Common myeloid progenitor, CD34-positive (primary cell): ENCODE measurements at regions of chr1 and their contacts with region 1.

Region 1: DNA sequence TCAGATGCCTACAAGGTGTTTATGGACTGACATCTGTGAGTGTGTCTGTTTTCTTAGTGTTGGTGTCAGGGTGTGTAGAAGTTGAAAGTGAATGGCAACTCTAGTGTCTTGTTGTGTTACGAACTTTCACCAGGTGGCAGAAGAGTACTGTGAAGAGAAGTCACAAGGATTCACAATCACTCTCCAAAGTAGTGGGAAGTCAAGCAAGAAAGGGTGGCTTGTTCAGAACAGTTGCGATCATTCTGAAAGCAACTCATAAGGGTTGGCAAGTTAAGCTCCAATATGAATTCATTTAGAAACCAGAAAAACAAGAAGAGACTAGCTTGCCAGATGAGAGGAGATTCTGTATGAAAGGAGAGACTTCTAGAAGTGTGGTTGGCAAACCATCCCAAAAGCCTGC is 86.1 kb downstream of the FASLG start:
- DNase-seq: peak; percentile 82 to 87 (median 86)
- H3K4me3 ChIP-seq: no peak overlapping the region
- H3K27ac ChIP-seq: no peak overlapping the region
- H3K4me1 ChIP-seq: peaks cover 19 to 26% (median 22%) of the 10 kb centered on the region in 4 experiments
- H3K27me3 ChIP-seq: no peaks in the 10 kb centered on the region

Region 2: GRCh38 chr1:172566196-172566997 is 178.6 kb before region 1 on chr1:
- CTCF ChIA-PET with region 1: no interaction called
- POLR2A ChIA-PET with region 1: no interaction called
- DNase-seq: no peak
- H3K4me3 ChIP-seq: no peak overlapping the region
- H3K27ac ChIP-seq: no peak overlapping the region
- H3K4me1 ChIP-seq: no peaks in the 10 kb centered on the region
- H3K27me3 ChIP-seq: no peaks in the 10 kb centered on the region

Region 3: DNA sequence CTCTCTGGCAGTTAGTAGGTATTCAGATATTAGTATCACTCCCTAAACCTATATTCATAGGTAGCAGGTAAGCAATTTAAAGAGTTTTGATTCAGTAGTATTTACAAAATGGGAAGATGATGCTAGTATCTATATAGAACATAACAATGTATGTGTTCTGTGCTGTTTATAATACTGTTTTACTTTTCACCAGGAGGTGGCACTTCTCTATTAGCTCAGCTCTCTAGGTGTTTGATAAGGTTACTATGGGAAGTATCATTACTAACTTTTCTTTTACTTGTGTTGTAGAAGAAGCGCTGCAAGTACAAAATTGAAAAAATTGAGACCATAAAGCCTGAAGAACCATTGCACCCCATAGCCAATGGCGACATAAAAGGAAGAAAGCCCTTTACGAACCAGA is 135.5 kb before region 1 on chr1:
- CTCF ChIA-PET with region 1: interaction called, 17 read pairs
- POLR2A ChIA-PET with region 1: no interaction called
- DNase-seq: peak; percentile 29 to 55 (median 54)
- H3K4me3 ChIP-seq: no peak overlapping the region
- H3K27ac ChIP-seq: no peak overlapping the region
- H3K4me1 ChIP-seq: no peaks in the 10 kb centered on the region
- H3K27me3 ChIP-seq: no peaks in the 10 kb centered on the region

Region 4: GRCh38 chr1:172766462-172766861 is 21.4 kb after region 1 on chr1:
- CTCF ChIA-PET with region 1: interaction called, 11 read pairs
- POLR2A ChIA-PET with region 1: no interaction called
- DNase-seq: no peak
- H3K4me3 ChIP-seq: no peak overlapping the region
- H3K27ac ChIP-seq: no peak overlapping the region
- H3K4me1 ChIP-seq: peaks cover 0 to 16% (median 8%) of the 10 kb centered on the region in 4 experiments
- H3K27me3 ChIP-seq: no peaks in the 10 kb centered on the region

Region 5: GRCh38 chr1:173202430-173203145 is 457.6 kb after region 1 on chr1:
- CTCF ChIA-PET with region 1: interaction called, 222 read pairs
- POLR2A ChIA-PET with region 1: interaction called, 3 read pairs
- DNase-seq: peak; percentile 59 to 67 (median 65)
- H3K4me3 ChIP-seq: peak overlapping the region in 6 of 7 experiments; percentile 65 to 86 (median 73)
- H3K27ac ChIP-seq: peak overlapping the region; percentile 55 to 83
- H3K4me1 ChIP-seq: peaks cover 38 to 79% (median 51%) of the 10 kb centered on the region in 4 experiments
- H3K27me3 ChIP-seq: no peaks in the 10 kb centered on the region

Region 6: GRCh38 chr1:173410794-173411236 is 665.8 kb after region 1 on chr1:
- CTCF ChIA-PET with region 1: interaction called, 13 read pairs
- POLR2A ChIA-PET with region 1: no interaction called
- DNase-seq: peak in 1 of 3 donors; percentile 25
- H3K4me3 ChIP-seq: peak overlapping the region in 1 of 7 experiments; percentile 29
- H3K27ac ChIP-seq: no peak overlapping the region
- H3K4me1 ChIP-seq: peaks cover 29 to 70% (median 52%) of the 10 kb centered on the region in 4 experiments
- H3K27me3 ChIP-seq: no peaks in the 10 kb centered on the region